ENCODE measurements at regions of chr1 and their contacts with region 1.

Region 1: GRCh38 chr1:156445789-156446263 is 54.7 kb downstream of the MEF2D start:
- DNase-seq: peak; percentile 82
- H3K27ac ChIP-seq: no peak overlapping the region
- CTCF ChIP-seq: peak; percentile 93

Region 2: GRCh38 chr1:156090822-156091188 is 355.0 kb before region 1 on chr1:
- CTCF ChIA-PET with region 1: no interaction called
- POLR2A ChIA-PET with region 1: no interaction called
- DNase-seq: peak; percentile 78
- H3K27ac ChIP-seq: peak overlapping the region; percentile 52
- CTCF ChIP-seq: peak; percentile 80

Region 3: DNA sequence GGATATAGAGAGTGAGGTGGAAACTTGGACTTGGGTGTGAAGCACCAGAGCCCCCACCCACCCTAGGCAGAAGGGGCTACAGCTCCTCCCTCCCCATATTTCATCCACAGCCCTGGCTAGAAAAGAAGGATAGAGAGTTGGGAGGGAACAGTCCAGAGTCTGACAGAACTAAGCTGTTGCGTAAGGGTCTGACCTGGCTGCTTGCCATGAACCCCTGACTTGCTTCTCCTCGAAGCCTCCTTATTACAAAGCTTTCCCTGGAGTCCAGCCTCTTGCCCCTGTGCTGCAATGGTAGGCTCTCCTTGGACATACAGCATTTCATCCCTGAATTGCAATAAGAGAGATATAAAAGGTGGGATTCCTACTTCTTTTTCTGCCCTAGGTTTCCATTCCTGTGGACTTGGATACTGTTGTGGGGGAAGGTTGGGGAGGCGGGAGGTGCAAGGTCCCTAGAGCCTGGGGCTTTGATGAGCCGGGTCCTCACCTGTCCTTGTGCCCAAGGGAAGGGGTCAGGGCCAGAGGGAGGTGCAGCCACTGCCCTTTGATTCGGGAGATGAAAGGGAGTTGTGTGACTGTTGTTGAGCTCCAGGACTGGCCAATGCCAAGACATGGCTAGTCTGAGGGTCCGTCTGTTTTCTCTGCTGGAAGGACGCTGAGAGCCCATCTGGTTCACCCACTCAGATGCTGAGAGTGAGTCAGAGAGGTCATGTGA is 74.1 kb before region 1 on chr1:
- CTCF ChIA-PET with region 1: interaction called, 15 read pairs
- POLR2A ChIA-PET with region 1: no interaction called
- DNase-seq: no peak
- H3K27ac ChIP-seq: no peak overlapping the region
- CTCF ChIP-seq: no peak

Region 4: DNA sequence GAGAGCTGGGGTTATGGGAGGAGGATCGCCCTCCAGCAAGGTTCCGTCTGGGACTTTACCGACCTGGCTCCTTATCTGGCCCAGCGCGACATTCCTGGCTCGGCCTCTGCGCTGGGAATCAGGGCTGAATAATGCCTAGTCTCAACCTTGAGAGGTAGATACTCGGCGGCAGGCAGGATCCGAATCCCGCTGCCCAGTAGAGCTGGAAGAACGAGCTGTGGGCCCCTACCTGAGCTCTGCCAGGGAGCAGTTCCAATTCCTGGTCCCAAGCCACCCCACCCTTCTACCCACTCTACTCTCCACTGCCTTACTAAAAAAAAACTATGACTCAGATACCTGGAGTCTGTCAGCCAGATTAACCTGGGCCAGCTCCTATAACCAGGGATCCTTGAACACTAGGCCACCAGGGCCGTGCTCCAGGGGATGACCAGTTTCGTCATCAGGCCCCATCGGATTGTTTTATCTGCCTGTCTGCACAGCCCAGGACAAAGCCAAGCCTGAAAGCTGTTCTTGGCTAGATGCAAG is 23.2 kb before region 1 on chr1:
- CTCF ChIA-PET with region 1: interaction called, 12 read pairs
- POLR2A ChIA-PET with region 1: no interaction called
- DNase-seq: peak; percentile 22
- H3K27ac ChIP-seq: no peak overlapping the region
- CTCF ChIP-seq: no peak

Region 5: DNA sequence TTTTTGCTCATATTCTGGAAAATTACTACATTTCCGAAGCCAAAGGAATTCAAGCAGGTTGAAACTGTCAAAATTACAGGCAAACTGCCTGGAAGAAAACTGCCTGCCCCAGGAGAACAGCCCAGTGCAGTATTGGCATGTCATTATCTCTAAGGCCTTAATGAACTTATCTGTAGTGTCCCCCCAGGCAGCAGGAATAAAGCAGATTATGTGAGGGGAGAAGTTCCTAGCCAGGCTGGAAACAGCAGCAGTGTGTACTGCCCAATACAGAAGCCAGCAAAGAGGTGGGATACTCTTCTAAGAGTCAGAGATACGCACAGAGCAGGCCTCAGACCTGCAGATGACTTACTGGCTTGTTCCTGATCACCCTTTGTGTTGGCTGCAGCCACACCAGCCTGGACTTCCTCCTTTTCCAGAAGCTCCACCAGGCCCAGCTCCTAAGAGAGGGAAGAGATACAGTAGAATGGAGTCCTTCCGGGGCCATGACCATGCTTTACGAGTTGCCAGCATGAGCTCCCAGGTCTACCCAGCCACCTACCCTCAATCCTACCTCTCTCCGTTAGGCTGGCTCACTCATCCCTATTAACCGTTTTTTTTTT is 114.9 kb after region 1 on chr1:
- CTCF ChIA-PET with region 1: no interaction called
- POLR2A ChIA-PET with region 1: no interaction called
- DNase-seq: no peak
- H3K27ac ChIP-seq: no peak overlapping the region
- CTCF ChIP-seq: no peak